Left cardiac atrium (tissue), 4 donors: ENCODE measurements at regions of chr17 and their contacts with region 1.

Region 1: GRCh38 chr17:49031965-49032928 is 35.1 kb downstream of the IGF2BP1 start:
- DNase-seq: no peak
- ATAC-seq: peak; percentile 76 to 85

Region 2: GRCh38 chr17:48804925-48805411 is 227.3 kb before region 1 on chr17:
- intact Hi-C with region 1: loop called in 1 of 2 experiments (anchors 10 kb)
- DNase-seq: peak; percentile 56
- ATAC-seq: peak; percentile 82 to 90